HEK293T (cell line): ENCODE measurements at regions of chr5 and their contacts with region 1.

Region 1: GRCh38 chr5:172697123-172698121 is 56.4 kb downstream of the NEURL1B start:
- DNase-seq: peak; percentile 90

Region 2: DNA sequence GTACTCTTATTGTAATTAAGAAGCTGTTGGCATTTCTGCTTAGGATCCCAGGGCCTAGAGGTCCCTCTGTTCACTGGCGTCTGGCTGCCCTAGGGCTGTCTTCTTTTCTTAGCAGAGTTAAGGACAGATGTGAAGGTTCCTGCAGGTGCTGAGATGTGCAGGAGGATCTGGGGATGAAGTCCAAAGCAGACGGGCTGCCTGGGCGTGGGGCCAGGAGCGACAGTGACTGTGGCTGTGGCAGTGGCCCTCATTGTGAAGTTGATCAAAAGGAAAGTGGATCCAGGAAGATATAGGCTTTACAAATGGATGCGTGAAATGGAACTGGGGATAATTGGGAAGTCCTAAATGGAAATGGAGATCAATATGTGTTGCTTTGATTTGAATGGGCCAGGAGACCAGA is 224.0 kb before region 1 on chr5:
- CTCF ChIA-PET with region 1: interaction called, 11 read pairs
- POLR2A ChIA-PET with region 1: interaction called, 3 read pairs
- DNase-seq: no peak

Region 3: GRCh38 chr5:172479044-172479783 is 218.2 kb before region 1 on chr5:
- CTCF ChIA-PET with region 1: interaction called, 22 read pairs
- POLR2A ChIA-PET with region 1: interaction called, 4 read pairs
- DNase-seq: peak; percentile 92